Adrenal gland (tissue), 19 donors: ENCODE measurements at regions of chr6 and their contacts with region 1.

Region 1: GRCh38 chr6:166402582-166403277 is 20.0 kb upstream of the MPC1 start:
- DNase-seq: peak in 1 of 7 donors; percentile 31
- H3K4me3 ChIP-seq: no peak overlapping the region
- H3K27ac ChIP-seq: no peak overlapping the region
- H3K4me1 ChIP-seq: no peaks in the 10 kb centered on the region
- H3K27me3 ChIP-seq: no peaks in the 10 kb centered on the region
- CTCF ChIP-seq: no peak
- POLR2A ChIP-seq: no peak

Region 2: DNA sequence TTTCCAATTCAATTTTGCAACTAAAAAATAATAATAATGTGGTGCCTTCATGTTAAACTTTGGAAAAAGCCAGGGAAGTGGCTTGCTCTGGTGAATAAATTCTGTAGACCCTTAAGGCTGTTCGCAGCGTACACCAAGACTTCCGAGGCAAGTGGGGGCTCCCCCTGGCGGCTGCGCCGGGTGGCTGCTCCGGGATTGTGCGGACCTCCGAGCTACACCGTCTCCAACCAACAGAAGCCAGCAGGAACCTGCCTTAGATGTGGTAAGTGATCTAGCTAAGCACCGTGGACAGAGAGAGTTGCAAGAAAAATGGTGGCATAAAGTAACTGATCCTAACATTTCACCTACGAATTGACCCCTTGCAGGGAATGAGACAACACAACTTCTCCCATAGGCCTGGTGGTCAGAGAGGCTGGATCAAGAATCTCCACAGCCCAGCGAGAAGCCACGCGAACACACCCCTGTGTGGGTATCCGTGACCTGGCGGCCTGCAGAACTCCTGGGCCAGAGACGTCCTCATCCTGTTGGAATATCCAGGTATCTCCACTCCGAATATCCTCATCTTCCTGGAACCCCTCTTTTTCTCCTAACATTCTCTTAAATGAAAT is 304.7 kb before region 1 on chr6:
- intact Hi-C with region 1: no loop called
- DNase-seq: peak; percentile 48 to 90 (median 79)
- H3K4me3 ChIP-seq: peak overlapping the region in 1 of 4 donors; percentile 52
- H3K27ac ChIP-seq: no peak overlapping the region
- H3K4me1 ChIP-seq: no peaks in the 10 kb centered on the region
- H3K27me3 ChIP-seq: no peaks in the 10 kb centered on the region
- CTCF ChIP-seq: peak; percentile 67 to 91 (median 84)
- POLR2A ChIP-seq: no peak

Region 3: DNA sequence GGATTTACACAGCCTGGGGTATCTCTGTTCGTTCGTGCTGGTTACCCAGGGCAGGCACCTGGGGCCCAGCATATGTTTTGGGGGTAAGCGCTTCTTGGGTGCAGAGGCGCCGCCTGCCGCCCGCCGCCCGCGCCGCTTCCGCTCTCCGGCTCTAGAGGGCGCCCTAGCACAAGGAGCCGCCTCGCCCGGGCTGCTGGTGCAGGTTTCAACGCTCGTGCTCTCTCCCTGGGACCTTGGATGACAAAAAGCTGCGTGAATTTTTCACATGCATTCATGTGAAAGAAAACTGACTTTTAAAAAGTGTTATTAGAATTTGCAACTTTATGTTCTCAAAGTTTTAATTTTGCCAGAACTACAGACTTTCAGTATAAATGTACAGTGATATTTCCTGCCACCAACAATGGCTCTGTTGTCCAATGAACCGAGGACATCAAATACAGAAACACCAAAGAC is 127.0 kb before region 1 on chr6:
- intact Hi-C with region 1: loop called (anchors 2 to 5 kb)
- DNase-seq: peak; percentile 45 to 80 (median 70)
- H3K4me3 ChIP-seq: no peak overlapping the region
- H3K27ac ChIP-seq: no peak overlapping the region
- H3K4me1 ChIP-seq: no peaks in the 10 kb centered on the region
- H3K27me3 ChIP-seq: no peaks in the 10 kb centered on the region
- CTCF ChIP-seq: peak; percentile 84 to 99 (median 93)
- POLR2A ChIP-seq: no peak

Region 4: DNA sequence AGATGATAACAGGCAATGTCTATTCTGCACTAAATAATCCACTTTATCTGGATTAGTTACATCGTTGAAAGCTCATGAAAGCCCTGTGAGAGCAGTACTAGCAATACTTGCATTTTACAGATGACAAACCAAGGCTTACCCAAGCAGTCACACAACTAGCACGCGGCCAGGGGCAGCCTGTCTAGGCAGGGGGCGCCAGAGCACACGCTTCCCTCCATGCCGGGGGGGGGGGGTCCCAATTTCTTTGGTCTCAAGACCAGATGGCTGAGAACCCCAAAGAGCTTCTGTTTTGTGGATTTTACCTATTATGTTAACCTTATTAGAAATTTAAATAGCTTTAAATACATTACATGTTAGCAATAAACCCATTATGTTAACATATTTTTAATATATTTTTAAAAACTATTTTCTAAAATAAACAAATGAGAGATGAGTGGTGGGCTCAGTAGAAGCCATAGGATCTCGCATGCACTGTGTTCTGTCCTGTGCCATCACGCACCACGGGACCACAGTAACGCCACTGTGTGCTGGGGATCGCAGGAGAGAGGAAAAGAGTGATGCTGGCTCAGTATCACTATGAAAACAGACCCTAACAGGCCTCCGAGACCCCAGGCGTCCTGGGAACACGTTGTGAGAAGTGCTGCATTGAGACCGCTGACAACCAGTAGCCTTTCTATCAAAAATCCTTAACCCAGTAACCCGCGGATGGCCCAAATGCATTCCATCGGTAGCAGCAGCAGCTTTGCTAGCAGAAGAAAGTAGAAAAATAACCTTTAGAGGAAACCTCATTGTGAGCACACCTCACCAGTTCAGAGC is 89.3 kb before region 1 on chr6:
- intact Hi-C with region 1: loop called in 1 of 2 experiments (anchors 5 kb)
- DNase-seq: peak in 5 of 7 donors; percentile 38 to 49 (median 41)
- H3K4me3 ChIP-seq: no peak overlapping the region
- H3K27ac ChIP-seq: no peak overlapping the region
- H3K4me1 ChIP-seq: peaks cover 0 to under 1% of the 10 kb centered on the region in 2 donors
- H3K27me3 ChIP-seq: peaks cover 9% of the 10 kb centered on the region
- CTCF ChIP-seq: peak; percentile 41 to 65 (median 62)
- POLR2A ChIP-seq: no peak